Activated CD4-positive, alpha-beta T cell treated with anti-CD3 and anti-CD28 coated beads, Interleukin-2, amount 10 ng/mL, durations not matched to agents 24 days and 14 days (primary cell): ENCODE measurements at regions of chr1 and their contacts with region 1.

Region 1: DNA sequence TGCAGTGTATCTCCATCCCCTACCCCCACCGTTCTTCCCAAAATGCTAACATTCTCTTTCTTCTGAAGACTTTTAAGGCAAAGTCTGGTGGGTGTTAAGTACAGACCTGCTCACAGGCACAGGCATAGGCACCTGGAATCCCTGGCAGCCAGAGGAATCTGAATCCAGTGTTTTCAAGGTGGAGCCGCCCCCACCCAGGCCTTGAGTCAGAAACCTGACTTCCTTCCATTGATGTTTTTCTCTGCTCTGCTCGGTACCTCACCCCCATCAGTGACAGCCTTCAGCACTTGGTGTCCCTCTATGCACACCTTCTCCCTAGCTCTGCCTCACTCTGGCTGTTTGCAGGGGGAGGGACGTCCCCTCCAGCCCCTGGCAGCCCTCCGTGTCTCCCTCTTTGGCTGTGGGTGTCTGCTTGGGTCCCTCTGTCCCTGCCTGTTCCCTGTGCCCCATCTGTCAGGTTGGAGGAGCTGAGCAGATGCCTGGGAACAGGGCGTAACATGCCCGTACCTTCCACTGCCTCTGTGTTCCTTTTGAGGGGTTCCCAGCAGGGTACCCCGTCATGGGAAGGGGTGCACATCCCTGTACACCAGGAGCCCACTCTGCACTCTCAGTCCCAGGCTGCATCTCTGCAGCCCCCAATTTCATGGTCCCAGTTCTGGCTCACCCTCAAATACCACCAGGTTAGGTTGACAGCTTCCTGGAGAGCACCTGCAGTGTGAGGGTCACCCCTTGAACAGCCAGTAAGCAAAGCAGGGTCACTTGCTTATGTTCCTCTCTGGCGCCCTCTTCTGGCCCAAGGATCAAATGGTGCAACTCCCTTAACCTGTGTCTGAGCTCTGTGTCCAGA is 6.7 kb downstream of the NCDN start:
- DNase-seq: peak; percentile 94
- H3K4me3 Mint-ChIP-seq: no peak overlapping the region
- H3K27ac Mint-ChIP-seq: peak overlapping the region; percentile 48
- H3K4me1 Mint-ChIP-seq: peaks cover 27% of the 10 kb centered on the region
- H3K27me3 Mint-ChIP-seq: no peaks in the 10 kb centered on the region

Region 2: GRCh38 chr1:35715568-35716002 is 151.3 kb after region 1 on chr1:
- intact Hi-C with region 1: loop called (anchors 1 kb)
- DNase-seq: peak; percentile 94
- H3K4me3 Mint-ChIP-seq: peak overlapping the region; percentile 65
- H3K27ac Mint-ChIP-seq: no peak overlapping the region
- H3K4me1 Mint-ChIP-seq: peaks cover 36% of the 10 kb centered on the region
- H3K27me3 Mint-ChIP-seq: no peaks in the 10 kb centered on the region

Region 3: DNA sequence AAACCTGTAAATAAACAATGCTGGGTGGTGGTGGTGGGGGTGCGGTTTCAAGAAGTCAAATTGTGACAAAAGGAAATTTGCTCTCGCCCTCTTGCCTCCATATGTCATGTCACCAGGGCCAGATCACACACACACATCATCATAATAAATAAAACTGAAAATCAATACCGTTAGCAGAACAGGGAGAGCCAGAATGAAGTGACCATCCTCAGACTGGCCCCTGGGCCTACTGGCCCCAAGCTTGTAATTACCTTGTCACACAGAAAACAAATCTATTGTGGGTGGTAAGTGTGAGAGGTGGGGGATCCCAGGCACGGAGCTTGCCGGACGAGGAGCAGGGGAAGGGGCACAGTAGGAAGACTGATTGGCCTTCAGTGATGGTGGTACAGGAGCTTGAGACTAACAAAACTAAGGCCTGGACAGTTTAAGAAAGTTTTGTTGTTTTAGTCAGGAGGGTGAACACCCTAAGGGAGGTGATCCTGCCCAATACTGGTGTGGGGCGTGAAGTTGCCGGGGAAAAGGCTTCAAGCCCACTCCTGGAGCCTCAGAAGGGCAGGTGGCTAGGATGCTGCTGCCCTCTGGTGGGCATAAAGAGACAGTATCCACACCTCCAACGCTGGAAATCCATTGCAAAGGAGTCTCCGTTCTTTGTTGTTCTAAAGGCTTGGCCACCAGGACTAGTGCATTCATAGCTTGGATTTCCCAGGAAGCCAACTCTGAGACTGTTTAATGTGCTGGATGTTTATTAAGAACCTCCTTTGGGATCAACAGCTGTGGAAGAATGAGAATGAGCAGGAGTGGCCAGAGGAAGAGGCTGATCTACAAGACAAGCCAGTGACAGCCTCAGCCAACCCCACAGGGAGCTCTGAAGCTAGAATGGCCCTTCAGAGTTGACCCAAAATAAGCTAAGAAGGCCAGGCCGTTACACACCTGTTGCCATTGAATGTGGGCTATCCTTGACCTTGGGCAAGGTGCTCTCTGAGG is 162.5 kb after region 1 on chr1:
- intact Hi-C with region 1: loop called (anchors 1 kb)
- DNase-seq: peak; percentile 82
- H3K4me3 Mint-ChIP-seq: no peak overlapping the region
- H3K27ac Mint-ChIP-seq: no peak overlapping the region
- H3K4me1 Mint-ChIP-seq: peaks cover 2% of the 10 kb centered on the region
- H3K27me3 Mint-ChIP-seq: no peaks in the 10 kb centered on the region